Keratinocyte (primary cell): ENCODE measurements at regions of chr9 and their contacts with region 1.

Region 1: GRCh38 chr9:129610473-129611301 is 10.2 kb downstream of the C9orf50 start:
- DNase-seq: no peak
- H3K4me3 ChIP-seq: peak overlapping the region; percentile 47 to 80 (median 77)
- H3K27ac ChIP-seq: peak overlapping the region; percentile 43
- H3K4me1 ChIP-seq: peaks cover 17% of the 10 kb centered on the region
- H3K27me3 ChIP-seq: no peaks in the 10 kb centered on the region
- CTCF ChIP-seq: peak in 2 of 3 experiments; percentile 71 to 84

Region 2: DNA sequence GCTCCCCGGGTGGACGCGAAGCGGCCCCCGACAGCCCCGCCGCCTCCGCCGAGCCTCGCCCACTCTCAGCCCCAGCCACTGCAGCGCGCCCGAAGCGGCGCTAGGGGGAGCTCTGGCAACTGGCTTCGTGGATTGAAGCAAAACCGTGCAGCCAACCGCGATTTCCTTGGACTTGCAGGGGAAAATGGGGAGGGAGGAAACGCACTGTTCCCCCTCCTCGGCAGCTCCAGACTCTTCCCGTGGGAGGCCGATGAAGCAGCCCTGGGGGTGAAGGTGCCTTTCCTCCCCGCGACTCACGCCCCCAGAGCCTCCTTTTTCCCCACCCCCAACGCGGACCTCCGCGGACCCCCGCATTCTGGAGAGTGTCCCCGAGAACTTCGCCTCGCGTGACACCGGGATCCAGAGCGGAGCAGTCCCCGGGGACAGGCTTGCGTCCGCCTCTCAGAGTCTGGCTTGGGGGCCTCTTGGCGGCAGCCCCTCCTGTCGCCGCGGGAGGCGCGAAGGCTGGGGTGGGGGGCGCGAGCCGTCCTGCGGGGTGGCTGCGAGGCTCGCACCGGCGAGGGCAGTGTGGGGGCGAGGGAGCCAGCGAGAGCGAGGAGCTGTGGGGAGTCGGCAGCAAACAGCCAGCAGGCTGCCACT is 436.5 kb before region 1 on chr9:
- dilution Hi-C with region 1: loop called (anchors 25 kb)
- DNase-seq: peak; percentile 49
- H3K4me3 ChIP-seq: peak overlapping the region; percentile 50 to 95 (median 69)
- H3K27ac ChIP-seq: peak overlapping the region; percentile 66
- H3K4me1 ChIP-seq: peaks cover 21% of the 10 kb centered on the region
- H3K27me3 ChIP-seq: no peaks in the 10 kb centered on the region
- CTCF ChIP-seq: peak; percentile 92 to 98 (median 94)

Region 3: DNA sequence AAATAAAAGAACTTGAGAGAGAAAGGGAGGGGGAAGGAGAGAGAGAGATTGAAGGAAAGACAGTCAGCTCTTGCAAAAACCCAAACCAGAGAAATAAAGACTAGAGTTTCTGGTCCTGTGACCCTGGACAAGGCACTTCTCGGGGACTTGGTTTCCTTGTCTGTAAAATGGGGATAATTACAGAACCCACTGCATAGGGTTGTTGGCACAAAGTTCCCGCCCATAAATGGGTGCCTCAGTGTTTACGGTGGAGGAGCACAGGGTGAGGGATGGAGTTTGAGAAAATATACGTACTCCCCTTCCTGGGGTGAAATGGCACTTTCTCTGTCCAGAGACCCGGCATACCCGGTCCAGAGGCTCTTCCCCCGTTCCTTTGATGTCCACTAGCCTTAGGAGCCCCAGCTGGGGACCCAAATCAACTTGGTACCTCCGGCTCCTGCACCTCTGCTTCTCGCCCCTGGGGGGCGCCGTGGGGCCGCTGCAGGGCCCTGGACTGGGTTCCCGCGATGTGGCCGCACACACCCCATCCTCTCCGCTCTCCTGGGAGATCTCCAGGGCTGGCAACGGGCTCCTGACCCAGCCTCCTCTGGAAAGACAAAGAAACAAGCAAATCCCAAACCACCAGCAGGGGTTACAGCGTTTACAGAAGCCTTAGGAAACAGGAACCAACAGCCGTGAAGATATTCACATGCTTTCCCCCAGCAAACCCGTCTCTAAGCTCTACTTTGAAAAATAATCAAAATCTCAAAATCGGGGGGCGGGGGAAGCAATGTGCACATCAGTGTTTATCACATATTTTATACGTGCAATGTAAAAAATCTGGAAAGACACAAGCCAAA is 115.9 kb after region 1 on chr9:
- dilution Hi-C with region 1: no loop called
- DNase-seq: peak; percentile 28
- H3K4me3 ChIP-seq: no peak overlapping the region
- H3K27ac ChIP-seq: no peak overlapping the region
- H3K4me1 ChIP-seq: peaks cover 5% of the 10 kb centered on the region
- H3K27me3 ChIP-seq: no peaks in the 10 kb centered on the region
- CTCF ChIP-seq: peak; percentile 77 to 99 (median 88)